Activated CD4-positive, alpha-beta T cell treated with anti-CD3 and anti-CD28 coated beads for 36 hours (primary cell): ENCODE measurements at regions of chr19 and their contacts with region 1.

Region 1: DNA sequence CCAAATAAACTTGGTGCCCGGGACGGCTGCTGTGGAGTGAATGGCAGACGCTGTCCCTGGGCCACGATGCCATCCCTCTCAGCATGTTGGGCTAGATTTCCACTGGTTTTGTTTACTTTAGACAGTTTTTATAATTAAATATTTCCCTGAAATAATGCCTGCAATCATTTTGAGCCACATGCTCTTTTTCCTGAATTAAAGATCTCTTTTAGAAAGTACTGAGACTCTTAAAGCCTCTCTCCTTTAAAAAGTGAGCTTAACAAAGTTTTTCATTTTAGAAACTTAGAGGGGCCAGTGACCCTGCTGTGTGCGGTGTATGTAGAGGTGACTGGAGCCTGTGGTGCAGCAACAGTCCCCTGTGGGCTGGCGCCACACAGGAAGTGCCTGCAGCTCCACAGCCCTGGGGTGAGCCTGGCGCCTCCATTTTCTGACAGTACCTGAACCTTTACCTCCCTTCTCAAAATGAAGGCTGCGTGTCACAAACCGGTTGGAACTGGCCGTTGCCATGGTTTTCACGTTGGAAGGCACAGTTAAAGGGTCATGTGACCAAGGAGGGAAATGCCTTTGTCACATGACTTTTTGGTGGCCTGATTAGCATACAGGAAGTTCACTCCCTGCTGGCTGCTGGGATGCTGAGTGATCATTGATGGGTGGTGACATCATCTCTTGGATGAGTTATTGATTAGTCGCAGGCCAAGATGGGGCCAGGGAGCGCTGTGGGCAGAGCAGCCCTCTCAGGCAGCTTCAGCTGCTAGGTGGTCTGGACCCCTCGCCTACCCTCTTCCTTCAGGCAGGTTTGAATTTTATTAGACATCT is 26.3 kb downstream of the TSSK6 start:
- DNase-seq: peak; percentile 95
- ATAC-seq: peak; percentile 93
- H3K4me3 Mint-ChIP-seq: peak overlapping the region; percentile 43
- H3K27ac Mint-ChIP-seq: peak overlapping the region; percentile 97
- H3K4me1 Mint-ChIP-seq: peaks cover 57% of the 10 kb centered on the region
- H3K27me3 Mint-ChIP-seq: no peaks in the 10 kb centered on the region

Region 2: GRCh38 chr19:19145684-19146608 is 343.1 kb before region 1 on chr19:
- CTCF ChIA-PET with region 1: interaction called, 4 read pairs
- POLR2A ChIA-PET with region 1: no interaction called
- intact Hi-C with region 1: loop called in 1 of 2 experiments (anchors 1 kb)
- DNase-seq: peak; percentile 93
- ATAC-seq: peak; percentile 88
- H3K4me3 Mint-ChIP-seq: no peak overlapping the region
- H3K27ac Mint-ChIP-seq: no peak overlapping the region
- H3K4me1 Mint-ChIP-seq: no peaks in the 10 kb centered on the region
- H3K27me3 Mint-ChIP-seq: no peaks in the 10 kb centered on the region

Region 3: DNA sequence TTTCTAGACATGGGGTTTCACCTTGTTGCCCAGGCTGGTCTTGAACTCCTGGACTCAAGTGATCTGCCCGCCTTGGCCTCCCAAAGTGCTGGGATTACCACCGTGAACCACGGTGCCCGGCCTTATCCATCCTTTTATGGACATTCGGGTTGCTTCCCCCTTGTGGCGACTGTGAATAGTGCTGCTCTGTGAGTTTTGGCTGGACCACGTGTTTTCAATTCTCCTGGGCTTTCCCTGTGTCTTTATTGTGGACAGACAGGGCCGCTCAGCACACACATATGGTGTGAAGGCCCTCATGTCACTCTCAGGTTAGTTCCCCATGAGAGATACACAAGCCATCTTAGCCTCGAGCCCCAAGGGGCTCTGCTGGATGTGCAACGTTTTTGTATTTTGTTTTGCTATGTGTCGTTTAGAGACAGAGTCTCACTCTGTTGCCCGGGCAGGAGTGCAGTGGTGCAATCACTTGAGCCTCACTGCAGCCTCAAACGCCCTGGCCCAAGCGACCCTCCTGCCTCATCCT is 127.9 kb before region 1 on chr19:
- CTCF ChIA-PET with region 1: interaction called, 123 read pairs
- POLR2A ChIA-PET with region 1: interaction called, 3 read pairs
- intact Hi-C with region 1: loop called in 1 of 2 experiments (anchors 1 kb)
- DNase-seq: peak; percentile 88
- ATAC-seq: peak; percentile 76
- H3K4me3 Mint-ChIP-seq: no peak overlapping the region
- H3K27ac Mint-ChIP-seq: peak overlapping the region; percentile 31
- H3K4me1 Mint-ChIP-seq: peaks cover 31% of the 10 kb centered on the region
- H3K27me3 Mint-ChIP-seq: no peaks in the 10 kb centered on the region

Region 4: GRCh38 chr19:19385108-19385899 is 103.8 kb before region 1 on chr19:
- CTCF ChIA-PET with region 1: interaction called, 15 read pairs
- POLR2A ChIA-PET with region 1: interaction called, 6 read pairs
- intact Hi-C with region 1: loop called (anchors 1 kb)
- DNase-seq: peak; percentile 100
- ATAC-seq: peak; percentile 96
- H3K4me3 Mint-ChIP-seq: peak overlapping the region; percentile 86
- H3K27ac Mint-ChIP-seq: peak overlapping the region; percentile 78
- H3K4me1 Mint-ChIP-seq: peaks cover 36% of the 10 kb centered on the region
- H3K27me3 Mint-ChIP-seq: no peaks in the 10 kb centered on the region

Region 5: GRCh38 chr19:19410275-19411192 is 78.5 kb before region 1 on chr19:
- CTCF ChIA-PET with region 1: interaction called, 16 read pairs
- POLR2A ChIA-PET with region 1: interaction called, 7 read pairs
- intact Hi-C with region 1: loop called (anchors 1 kb)
- DNase-seq: peak; percentile 68
- ATAC-seq: peak; percentile 77
- H3K4me3 Mint-ChIP-seq: no peak overlapping the region
- H3K27ac Mint-ChIP-seq: peak overlapping the region; percentile 55
- H3K4me1 Mint-ChIP-seq: peaks cover 70% of the 10 kb centered on the region
- H3K27me3 Mint-ChIP-seq: no peaks in the 10 kb centered on the region